CD8-positive, alpha-beta T cell (primary cell): ENCODE measurements at regions of chr7 and their contacts with region 1.

Region 1: GRCh38 chr7:351681-352480 is 61.9 kb downstream of the FOXL3 start:
- DNase-seq: peak in 8 of 9 experiments; percentile 47 to 79 (median 70)
- ATAC-seq: peak; percentile 62
- H3K4me3 ChIP-seq: peak overlapping the region; percentile 53 to 74
- H3K4me3 Mint-ChIP-seq: no peak overlapping the region
- H3K27ac ChIP-seq: peak overlapping the region; percentile 74 to 80
- H3K27ac Mint-ChIP-seq: no peak overlapping the region
- H3K4me1 ChIP-seq: peaks cover 20% of the 10 kb centered on the region
- H3K4me1 Mint-ChIP-seq: peaks cover 20% of the 10 kb centered on the region
- H3K27me3 ChIP-seq: no peaks in the 10 kb centered on the region
- H3K27me3 Mint-ChIP-seq: no peaks in the 10 kb centered on the region
- CTCF ChIP-seq: no peak

Region 2: DNA sequence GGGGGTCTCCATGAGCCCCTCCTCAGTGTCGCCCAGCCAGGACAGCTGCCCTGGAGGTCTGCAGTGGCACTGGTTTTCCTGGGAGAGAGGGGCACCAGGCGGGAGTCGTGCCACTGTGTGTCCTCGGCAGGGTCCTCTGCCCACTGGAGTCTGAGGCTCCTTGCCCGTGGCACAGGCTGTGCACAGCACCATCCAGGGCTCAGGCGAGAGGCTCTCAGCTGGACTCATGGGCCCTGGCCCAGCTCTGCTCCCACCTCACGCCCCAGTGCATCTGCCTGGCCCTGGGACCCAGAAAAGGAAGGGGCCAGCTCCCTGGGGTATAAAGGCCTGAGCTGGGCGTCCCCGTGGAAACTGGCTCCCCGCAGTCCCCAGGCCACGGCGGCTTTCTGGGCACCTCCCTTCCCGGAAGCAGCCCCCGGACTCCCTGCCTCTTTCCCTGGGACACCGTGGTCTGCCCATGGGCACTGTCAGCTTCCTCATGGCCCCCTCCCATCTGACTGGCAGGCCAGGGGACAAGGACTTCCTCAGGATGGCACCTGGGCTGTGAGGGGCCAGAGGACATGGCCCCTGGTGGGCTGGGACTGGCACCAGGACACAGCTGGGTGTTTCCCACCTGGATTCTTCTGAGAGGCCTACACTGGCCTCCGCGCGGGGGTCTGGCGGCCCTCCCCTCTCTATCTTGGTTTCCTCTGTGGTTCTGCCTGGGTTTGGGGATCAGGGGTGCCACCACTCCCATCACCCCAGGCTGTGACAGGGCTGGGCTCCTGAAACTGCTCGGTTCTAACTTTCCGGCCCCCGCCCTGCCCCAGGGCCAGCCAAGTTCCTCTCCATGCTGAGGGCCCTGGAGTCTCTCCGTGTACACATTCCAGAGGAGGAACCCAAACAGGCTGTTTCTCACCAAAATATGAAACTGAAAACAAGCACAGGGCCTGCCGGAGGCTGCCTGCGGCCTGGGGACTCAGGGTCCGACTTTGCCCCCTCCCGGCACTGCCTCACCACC is 56.4 kb before region 1 on chr7:
- CTCF ChIA-PET with region 1: no interaction called
- POLR2A ChIA-PET with region 1: no interaction called
- intact Hi-C with region 1: no loop called
- DNase-seq: no peak
- ATAC-seq: no peak
- H3K4me3 ChIP-seq: no peak overlapping the region
- H3K4me3 Mint-ChIP-seq: no peak overlapping the region
- H3K27ac ChIP-seq: no peak overlapping the region
- H3K27ac Mint-ChIP-seq: no peak overlapping the region
- H3K4me1 ChIP-seq: no peaks in the 10 kb centered on the region
- H3K4me1 Mint-ChIP-seq: no peaks in the 10 kb centered on the region
- H3K27me3 ChIP-seq: peaks cover 0 to 2% of the 10 kb centered on the region in 2 experiments
- H3K27me3 Mint-ChIP-seq: peaks cover 19% of the 10 kb centered on the region
- CTCF ChIP-seq: no peak

Region 3: GRCh38 chr7:340200-340937 is 11.5 kb before region 1 on chr7:
- CTCF ChIA-PET with region 1: no interaction called
- POLR2A ChIA-PET with region 1: no interaction called
- intact Hi-C with region 1: no loop called
- DNase-seq: no peak
- ATAC-seq: no peak
- H3K4me3 ChIP-seq: no peak overlapping the region
- H3K4me3 Mint-ChIP-seq: no peak overlapping the region
- H3K27ac ChIP-seq: no peak overlapping the region
- H3K27ac Mint-ChIP-seq: no peak overlapping the region
- H3K4me1 ChIP-seq: peaks cover 11% of the 10 kb centered on the region
- H3K4me1 Mint-ChIP-seq: peaks cover 3% of the 10 kb centered on the region
- H3K27me3 ChIP-seq: no peaks in the 10 kb centered on the region
- H3K27me3 Mint-ChIP-seq: no peaks in the 10 kb centered on the region
- CTCF ChIP-seq: no peak

Region 4: GRCh38 chr7:362402-363096 is 10.7 kb after region 1 on chr7:
- CTCF ChIA-PET with region 1: interaction called, 5 read pairs
- POLR2A ChIA-PET with region 1: interaction called, 39 read pairs
- intact Hi-C with region 1: loop called in 1 of 2 experiments (anchors 1 kb)
- DNase-seq: peak in 8 of 9 experiments; percentile 41 to 84 (median 60)
- ATAC-seq: peak; percentile 43
- H3K4me3 ChIP-seq: peak overlapping the region; percentile 9 to 27
- H3K4me3 Mint-ChIP-seq: peak overlapping the region; percentile 80
- H3K27ac ChIP-seq: peak overlapping the region; percentile 19 to 67
- H3K27ac Mint-ChIP-seq: peak overlapping the region; percentile 92
- H3K4me1 ChIP-seq: peaks cover 78% of the 10 kb centered on the region
- H3K4me1 Mint-ChIP-seq: peaks cover 73% of the 10 kb centered on the region
- H3K27me3 ChIP-seq: no peaks in the 10 kb centered on the region
- H3K27me3 Mint-ChIP-seq: no peaks in the 10 kb centered on the region
- CTCF ChIP-seq: no peak

Region 5: GRCh38 chr7:379456-380138 is 27.7 kb after region 1 on chr7:
- CTCF ChIA-PET with region 1: no interaction called
- POLR2A ChIA-PET with region 1: interaction called, 4 read pairs
- intact Hi-C with region 1: loop called in 1 of 2 experiments (anchors 2 kb)
- DNase-seq: peak in 1 of 9 experiments; percentile 49
- ATAC-seq: no peak
- H3K4me3 ChIP-seq: peak overlapping the region; percentile 18 to 31
- H3K4me3 Mint-ChIP-seq: peak overlapping the region; percentile 63
- H3K27ac ChIP-seq: no peak overlapping the region
- H3K27ac Mint-ChIP-seq: no peak overlapping the region
- H3K4me1 ChIP-seq: peaks cover 30% of the 10 kb centered on the region
- H3K4me1 Mint-ChIP-seq: peaks cover 25% of the 10 kb centered on the region
- H3K27me3 ChIP-seq: no peaks in the 10 kb centered on the region
- H3K27me3 Mint-ChIP-seq: no peaks in the 10 kb centered on the region
- CTCF ChIP-seq: no peak

Region 6: GRCh38 chr7:418647-419280 is 66.9 kb after region 1 on chr7:
- CTCF ChIA-PET with region 1: no interaction called
- POLR2A ChIA-PET with region 1: no interaction called
- intact Hi-C with region 1: no loop called
- DNase-seq: no peak
- ATAC-seq: no peak
- H3K4me3 ChIP-seq: no peak overlapping the region
- H3K4me3 Mint-ChIP-seq: no peak overlapping the region
- H3K27ac ChIP-seq: no peak overlapping the region
- H3K27ac Mint-ChIP-seq: no peak overlapping the region
- H3K4me1 ChIP-seq: no peaks in the 10 kb centered on the region
- H3K4me1 Mint-ChIP-seq: no peaks in the 10 kb centered on the region
- H3K27me3 ChIP-seq: no peaks in the 10 kb centered on the region
- H3K27me3 Mint-ChIP-seq: no peaks in the 10 kb centered on the region
- CTCF ChIP-seq: no peak

Region 7: GRCh38 chr7:542713-543500 is 191.0 kb after region 1 on chr7:
- CTCF ChIA-PET with region 1: no interaction called
- POLR2A ChIA-PET with region 1: no interaction called
- intact Hi-C with region 1: no loop called
- DNase-seq: peak in 1 of 9 experiments; percentile 6
- ATAC-seq: no peak
- H3K4me3 ChIP-seq: no peak overlapping the region
- H3K4me3 Mint-ChIP-seq: no peak overlapping the region
- H3K27ac ChIP-seq: no peak overlapping the region
- H3K27ac Mint-ChIP-seq: no peak overlapping the region
- H3K4me1 ChIP-seq: no peaks in the 10 kb centered on the region
- H3K4me1 Mint-ChIP-seq: no peaks in the 10 kb centered on the region
- H3K27me3 ChIP-seq: no peaks in the 10 kb centered on the region
- H3K27me3 Mint-ChIP-seq: no peaks in the 10 kb centered on the region
- CTCF ChIP-seq: no peak

Region 8: DNA sequence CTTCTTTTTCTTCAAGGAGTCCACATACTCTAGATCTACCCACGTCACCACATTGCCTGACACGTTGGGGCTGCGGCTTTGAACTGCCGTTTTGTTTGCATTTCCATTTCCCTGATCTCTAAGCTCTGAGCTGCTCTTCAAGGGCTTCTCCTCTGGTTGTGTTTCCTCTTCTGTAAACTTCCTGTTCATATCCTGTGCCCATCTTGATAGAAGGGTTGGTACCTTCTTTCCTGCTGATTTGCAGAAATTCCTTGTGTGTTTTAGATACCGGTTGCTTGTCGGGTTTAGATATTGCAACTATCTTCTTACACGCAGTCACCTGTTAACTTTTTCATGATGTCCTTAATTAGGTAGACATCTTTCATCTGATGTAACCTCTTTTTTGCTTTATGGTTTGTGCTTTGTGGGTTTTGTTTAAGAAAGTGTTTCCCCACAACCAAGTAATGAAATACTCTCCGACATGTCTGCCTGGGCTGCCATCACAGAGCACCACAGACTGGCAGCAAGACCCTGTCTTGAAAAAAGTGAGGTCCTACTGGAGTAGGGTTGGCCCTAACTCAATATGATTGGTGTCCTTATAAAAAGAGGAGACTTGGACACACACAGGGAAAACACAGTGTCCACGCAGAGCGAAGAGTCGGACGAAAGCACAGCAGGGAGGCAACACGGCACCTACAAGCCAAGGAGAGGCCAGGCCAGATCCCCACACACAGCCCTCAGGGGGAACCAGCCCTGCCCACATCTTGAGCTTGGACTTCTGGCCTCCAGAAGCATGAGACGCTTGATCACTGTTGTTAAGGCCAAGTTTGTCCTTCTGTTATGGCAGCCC is 266.9 kb after region 1 on chr7:
- CTCF ChIA-PET with region 1: no interaction called
- POLR2A ChIA-PET with region 1: interaction called, 9 read pairs
- intact Hi-C with region 1: loop called in 1 of 2 experiments (anchors 1 kb)
- DNase-seq: peak; percentile 51 to 95 (median 77)
- ATAC-seq: peak; percentile 76
- H3K4me3 ChIP-seq: peak overlapping the region; percentile 3 to 30
- H3K4me3 Mint-ChIP-seq: peak overlapping the region; percentile 88
- H3K27ac ChIP-seq: peak overlapping the region; percentile 85 to 92
- H3K27ac Mint-ChIP-seq: peak overlapping the region; percentile 100
- H3K4me1 ChIP-seq: peaks cover 53% of the 10 kb centered on the region
- H3K4me1 Mint-ChIP-seq: peaks cover 63% of the 10 kb centered on the region
- H3K27me3 ChIP-seq: no peaks in the 10 kb centered on the region
- H3K27me3 Mint-ChIP-seq: no peaks in the 10 kb centered on the region
- CTCF ChIP-seq: no peak